ENCODE measurements at regions of chr7 and their contacts with region 1.

Region 1: DNA sequence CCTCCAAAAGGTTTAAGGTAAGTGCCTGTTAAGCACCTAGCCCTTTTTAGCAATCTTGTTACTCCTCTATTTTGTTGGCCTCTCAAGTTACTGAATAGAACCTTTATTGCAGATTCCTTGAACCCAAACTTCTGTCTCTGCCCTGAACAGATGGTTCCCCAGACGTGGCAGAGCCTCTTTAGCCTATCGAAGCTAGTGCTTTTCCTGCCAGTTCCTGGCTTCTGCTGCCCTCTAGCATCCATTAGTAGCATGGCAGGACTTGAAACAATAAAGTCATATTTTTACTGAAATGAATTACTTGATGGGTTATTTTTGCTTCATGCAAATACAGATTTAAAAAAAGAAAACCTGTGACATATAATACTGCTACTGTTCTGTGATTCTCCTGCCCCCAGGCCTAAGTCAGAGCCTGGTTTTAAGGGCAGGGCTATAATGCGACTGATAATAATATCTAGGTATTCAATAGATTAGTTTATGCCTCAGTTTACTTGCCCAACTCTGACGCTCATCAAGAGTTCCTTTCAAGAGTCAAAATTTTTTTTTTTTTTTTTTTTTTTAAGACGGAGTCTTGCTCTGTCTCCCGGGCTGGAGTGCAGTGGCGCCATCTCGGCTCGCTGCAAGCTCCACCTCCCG is 84.3 kb upstream of the PHF14 start:
- DNase-seq: peak; percentile 69
- H3K4me3 ChIP-seq: no peak overlapping the region
- H3K27ac ChIP-seq: no peak overlapping the region
- H3K4me1 ChIP-seq: peaks cover 8% of the 10 kb centered on the region
- CTCF ChIP-seq: peak; percentile 96

Region 2: DNA sequence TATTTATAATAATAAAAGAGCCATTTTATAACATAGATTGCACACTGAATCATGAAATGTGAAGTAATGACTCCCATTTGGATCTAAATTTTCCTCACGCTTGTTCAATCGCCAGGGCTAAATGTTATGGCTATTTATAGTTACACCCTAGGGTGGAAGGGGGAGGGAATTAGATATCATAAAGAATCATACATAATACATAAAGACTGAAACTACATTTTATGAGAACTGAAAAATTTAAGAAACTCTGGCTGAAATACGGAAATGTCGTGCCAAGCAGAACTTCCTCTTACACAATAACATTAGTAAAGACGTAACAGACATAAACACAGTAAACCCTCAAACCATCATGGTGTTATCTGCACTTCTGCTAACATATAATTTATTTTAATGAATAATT is 243.2 kb before region 1 on chr7:
- CTCF ChIA-PET with region 1: no interaction called
- POLR2A ChIA-PET with region 1: no interaction called
- intact Hi-C with region 1: loop called (anchors 2 kb)
- DNase-seq: no peak
- H3K4me3 ChIP-seq: no peak overlapping the region
- H3K27ac ChIP-seq: no peak overlapping the region
- H3K4me1 ChIP-seq: no peaks in the 10 kb centered on the region
- CTCF ChIP-seq: no peak

Region 3: GRCh38 chr7:11261519-11261958 is 372.2 kb after region 1 on chr7:
- CTCF ChIA-PET with region 1: no interaction called
- POLR2A ChIA-PET with region 1: interaction called, 12 read pairs
- intact Hi-C with region 1: no loop called
- DNase-seq: no peak
- H3K4me3 ChIP-seq: no peak overlapping the region
- H3K27ac ChIP-seq: no peak overlapping the region
- H3K4me1 ChIP-seq: no peaks in the 10 kb centered on the region
- CTCF ChIP-seq: no peak

Region 4: GRCh38 chr7:11343818-11344413 is 454.5 kb after region 1 on chr7:
- CTCF ChIA-PET with region 1: no interaction called
- POLR2A ChIA-PET with region 1: no interaction called
- intact Hi-C with region 1: loop called (anchors 10 kb)
- DNase-seq: peak; percentile 49
- H3K4me3 ChIP-seq: no peak overlapping the region
- H3K27ac ChIP-seq: no peak overlapping the region
- H3K4me1 ChIP-seq: no peaks in the 10 kb centered on the region
- CTCF ChIP-seq: peak; percentile 90